Astrocyte of the cerebellum (primary cell): ENCODE measurements at regions of chr1 and their contacts with region 1.

Region 1: GRCh38 chr1:46969014-46969619 is 27.8 kb upstream of the CYP4A11 start:
- DNase-seq: no peak
- H3K4me3 ChIP-seq: no peak overlapping the region
- CTCF ChIP-seq: no peak

Region 2: GRCh38 chr1:47031108-47031457 is 62.0 kb after region 1 on chr1:
- in situ Hi-C with region 1: loop called (anchors 10 kb)
- DNase-seq: peak; percentile 74
- H3K4me3 ChIP-seq: no peak overlapping the region
- CTCF ChIP-seq: no peak

Region 3: GRCh38 chr1:47710329-47711071 is 741.4 kb after region 1 on chr1:
- in situ Hi-C with region 1: no loop called
- DNase-seq: peak; percentile 5
- H3K4me3 ChIP-seq: no peak overlapping the region
- CTCF ChIP-seq: peak; percentile 98